ENCODE measurements at regions of chrX and their contacts with region 1.

Region 1: DNA sequence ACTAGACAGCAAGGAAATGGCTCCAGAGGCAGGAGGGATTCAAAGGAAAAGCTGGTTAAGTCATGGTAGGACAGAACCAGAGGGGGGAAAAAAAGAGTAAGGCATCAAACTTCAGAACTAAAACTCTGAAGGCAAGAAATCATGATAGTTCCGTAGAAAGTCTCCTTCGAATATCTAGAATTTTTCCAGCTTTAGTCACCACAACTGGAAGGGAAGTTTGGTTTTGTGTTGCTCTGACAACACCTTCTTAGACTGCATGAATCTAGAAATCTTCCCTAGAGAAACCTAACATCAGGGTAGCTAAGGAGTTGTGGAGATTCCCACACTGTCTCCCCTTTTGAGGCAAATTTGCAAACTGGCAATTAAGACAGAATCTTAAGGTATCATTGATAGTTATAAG is 33.7 kb downstream of the AMMECR1 start:
- DNase-seq: no peak
- H3K4me3 Mint-ChIP-seq: no peak overlapping the region
- H3K27ac Mint-ChIP-seq: no peak overlapping the region
- H3K4me1 Mint-ChIP-seq: peaks cover 19% of the 10 kb centered on the region
- H3K27me3 Mint-ChIP-seq: no peaks in the 10 kb centered on the region

Region 2: DNA sequence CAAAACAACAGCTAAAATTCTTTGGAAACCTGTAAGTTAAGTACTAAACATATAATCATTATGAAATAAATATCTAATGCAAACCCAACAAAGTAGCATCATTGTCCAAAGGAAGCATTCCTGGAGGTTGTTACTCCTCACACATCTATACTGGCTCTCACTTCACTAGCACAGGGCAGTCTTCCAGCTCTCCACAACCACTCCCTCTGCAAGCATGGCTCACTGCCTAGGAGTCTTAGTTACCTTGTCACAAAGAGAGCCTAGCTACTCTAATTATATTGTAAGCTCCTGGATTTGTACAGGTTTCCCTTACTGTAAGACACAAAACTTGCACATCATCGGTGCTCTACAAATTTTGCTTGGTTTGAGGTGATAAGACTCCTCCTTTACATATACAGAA is 42.3 kb before region 1 on chrX:
- CTCF ChIA-PET with region 1: no interaction called
- intact Hi-C with region 1: loop called (anchors 2 kb)
- DNase-seq: no peak
- H3K4me3 Mint-ChIP-seq: no peak overlapping the region
- H3K27ac Mint-ChIP-seq: no peak overlapping the region
- H3K4me1 Mint-ChIP-seq: peaks cover 39% of the 10 kb centered on the region
- H3K27me3 Mint-ChIP-seq: no peaks in the 10 kb centered on the region

Measured in activated naive CD4-positive, alpha-beta T cell treated with anti-CD3 and anti-CD28 coated beads for 36 hours (primary cell).